GM12878 (cell line): ENCODE measurements at regions of chr4 and their contacts with region 1.

Region 1: DNA sequence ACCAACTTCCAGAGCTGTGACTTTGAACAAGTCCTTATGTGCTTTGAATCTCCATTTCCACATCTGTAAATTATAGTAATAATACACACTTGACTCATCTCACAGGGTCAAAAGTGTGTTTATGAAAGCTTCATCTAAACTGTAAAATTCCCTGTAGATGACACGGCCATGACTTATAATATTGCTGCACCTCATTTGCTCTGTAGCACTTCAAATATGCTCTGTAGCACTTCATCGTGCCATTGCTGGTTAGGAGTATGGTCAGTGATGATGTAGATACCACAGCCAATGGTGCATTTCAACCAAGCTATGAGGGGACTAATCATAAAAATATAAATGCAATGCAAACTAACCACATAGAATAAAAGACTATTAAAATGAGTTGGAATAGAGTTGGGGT is 318.6 kb downstream of the ANK2 start:
- DNase-seq: no peak
- ATAC-seq: no peak
- H3K4me3 ChIP-seq: no peak overlapping the region
- H3K27ac ChIP-seq: no peak overlapping the region
- H3K4me1 ChIP-seq: no peaks in the 10 kb centered on the region
- H3K27me3 ChIP-seq: no peaks in the 10 kb centered on the region
- CTCF ChIP-seq: no peak
- EP300 ChIP-seq: no peak
- POLR2A ChIP-seq: no peak
- RAD21 ChIP-seq: no peak

Region 2: DNA sequence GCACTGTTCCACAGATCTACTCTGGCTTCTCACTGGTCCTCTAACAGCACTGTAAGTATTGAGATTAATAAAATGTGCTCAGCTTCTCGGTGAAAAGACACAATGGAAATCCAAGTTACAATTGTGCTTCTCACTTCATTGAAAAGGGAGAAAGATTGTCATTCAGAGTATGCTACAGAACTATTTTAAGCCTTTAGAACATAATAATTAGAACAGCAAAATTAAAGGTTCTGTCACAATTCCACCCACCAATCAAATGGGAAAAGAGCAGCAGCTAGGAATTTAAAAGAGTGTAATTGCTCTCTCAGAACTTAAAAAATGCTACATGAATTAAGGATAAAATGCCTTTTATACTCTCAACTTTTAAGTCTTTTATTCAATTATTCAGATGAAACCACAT is 10.8 kb after region 1 on chr4:
- CTCF ChIA-PET with region 1: interaction called, 3 read pairs
- POLR2A ChIA-PET with region 1: no interaction called
- RAD21 ChIA-PET with region 1: no interaction called
- SMC1A ChIA-PET with region 1: interaction called, 11 read pairs
- in situ Hi-C with region 1: no loop called
- intact Hi-C with region 1: no loop called
- DNase-seq: no peak
- ATAC-seq: no peak
- H3K4me3 ChIP-seq: no peak overlapping the region
- H3K27ac ChIP-seq: no peak overlapping the region
- H3K4me1 ChIP-seq: no peaks in the 10 kb centered on the region
- H3K27me3 ChIP-seq: no peaks in the 10 kb centered on the region
- CTCF ChIP-seq: no peak
- EP300 ChIP-seq: no peak
- POLR2A ChIP-seq: no peak
- RAD21 ChIP-seq: no peak